ENCODE measurements at regions of chr19 and their contacts with region 1.

Region 1: DNA sequence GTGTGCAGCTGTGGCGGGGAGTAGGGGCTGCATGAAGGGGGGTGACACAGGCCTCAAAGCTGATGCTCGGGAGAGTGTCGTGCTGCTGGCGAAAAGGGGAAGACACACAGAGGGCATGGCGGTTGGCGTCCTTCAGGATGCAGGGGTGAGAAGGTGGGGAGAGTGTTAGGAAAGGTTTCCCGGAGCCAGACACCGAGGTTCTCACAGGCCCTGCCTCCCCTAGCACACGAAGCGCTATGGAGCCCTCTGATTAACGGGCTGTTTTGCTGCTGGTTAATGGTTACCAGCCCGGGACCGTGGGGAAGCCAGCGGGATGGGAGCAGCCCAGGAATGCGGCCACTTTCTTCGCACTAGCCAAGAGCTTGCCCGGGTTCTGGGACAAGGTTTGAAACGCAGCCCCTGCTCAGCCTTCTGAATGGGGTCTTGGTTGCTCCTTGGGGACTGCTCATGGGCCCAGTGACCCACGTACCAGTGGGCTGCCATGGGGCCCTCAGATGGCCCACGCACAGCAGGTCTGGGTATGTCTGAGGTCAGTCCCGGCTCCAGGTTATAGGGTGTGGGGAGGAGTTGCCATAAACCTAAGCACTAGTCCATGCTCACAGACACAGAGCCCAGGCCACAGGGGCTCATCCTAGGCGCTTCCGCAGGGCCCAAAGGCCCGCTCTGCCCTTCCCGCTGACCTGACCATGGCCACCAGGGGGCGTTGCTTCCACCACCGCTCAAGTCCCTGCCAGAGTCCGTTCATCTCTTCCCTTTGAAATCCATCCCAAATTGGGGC is 31.3 kb upstream of the ISYNA1 start:
- DNase-seq: peak in 6 of 10 donors; percentile 47 to 62 (median 50)
- H3K4me3 ChIP-seq: no peak overlapping the region
- H3K27ac ChIP-seq: peak overlapping the region in 3 of 59 donors; percentile 27 to 48 (median 28)
- H3K27me3 ChIP-seq: no peaks in the 10 kb centered on the region
- CTCF ChIP-seq: peak; percentile 31 to 84 (median 70)

Region 2: GRCh38 chr19:18521885-18522624 is 52.8 kb after region 1 on chr19 and contains the start of gene ELL:
- intact Hi-C with region 1: loop called (anchors 5 kb)
- DNase-seq: peak; percentile 100
- H3K4me3 ChIP-seq: peak within 1 kb of the TSS; percentile 62 to 100 (median 98)
- H3K27ac ChIP-seq: peak within 1 kb of the TSS; percentile 9 to 98 (median 91)
- H3K27me3 ChIP-seq: no peaks in the 10 kb centered on the region
- CTCF ChIP-seq: peak in 28 of 56 donors; percentile 5 to 54 (median 20)
- total RNA-seq, gene ELL: 9.4 to 22.3 (median 15.4) TPM

Region 3: GRCh38 chr19:18571564-18572300 is 102.5 kb after region 1 on chr19 and contains the start of gene UBA52:
- intact Hi-C with region 1: loop called in 1 of 2 experiments (anchors 5 kb)
- DNase-seq: peak; percentile 94 to 98 (median 96)
- H3K4me3 ChIP-seq: peak within 1 kb of the TSS; percentile 72 to 100 (median 95)
- H3K27ac ChIP-seq: peak within 1 kb of the TSS; percentile 32 to 93 (median 82)
- H3K27me3 ChIP-seq: no peaks in the 10 kb centered on the region
- CTCF ChIP-seq: peak in 35 of 56 donors; percentile 1 to 59 (median 29)
- total RNA-seq, gene UBA52: 378 to 577 (median 453) TPM

Region 4: GRCh38 chr19:18839465-18840287 is 370.4 kb after region 1 on chr19:
- intact Hi-C with region 1: loop called in 1 of 2 experiments (anchors 5 kb)
- DNase-seq: no peak
- H3K4me3 ChIP-seq: no peak overlapping the region
- H3K27ac ChIP-seq: no peak overlapping the region
- H3K27me3 ChIP-seq: no peaks in the 10 kb centered on the region
- CTCF ChIP-seq: no peak